ENCODE measurements at regions of chr5 and their contacts with region 1.

Region 1: DNA sequence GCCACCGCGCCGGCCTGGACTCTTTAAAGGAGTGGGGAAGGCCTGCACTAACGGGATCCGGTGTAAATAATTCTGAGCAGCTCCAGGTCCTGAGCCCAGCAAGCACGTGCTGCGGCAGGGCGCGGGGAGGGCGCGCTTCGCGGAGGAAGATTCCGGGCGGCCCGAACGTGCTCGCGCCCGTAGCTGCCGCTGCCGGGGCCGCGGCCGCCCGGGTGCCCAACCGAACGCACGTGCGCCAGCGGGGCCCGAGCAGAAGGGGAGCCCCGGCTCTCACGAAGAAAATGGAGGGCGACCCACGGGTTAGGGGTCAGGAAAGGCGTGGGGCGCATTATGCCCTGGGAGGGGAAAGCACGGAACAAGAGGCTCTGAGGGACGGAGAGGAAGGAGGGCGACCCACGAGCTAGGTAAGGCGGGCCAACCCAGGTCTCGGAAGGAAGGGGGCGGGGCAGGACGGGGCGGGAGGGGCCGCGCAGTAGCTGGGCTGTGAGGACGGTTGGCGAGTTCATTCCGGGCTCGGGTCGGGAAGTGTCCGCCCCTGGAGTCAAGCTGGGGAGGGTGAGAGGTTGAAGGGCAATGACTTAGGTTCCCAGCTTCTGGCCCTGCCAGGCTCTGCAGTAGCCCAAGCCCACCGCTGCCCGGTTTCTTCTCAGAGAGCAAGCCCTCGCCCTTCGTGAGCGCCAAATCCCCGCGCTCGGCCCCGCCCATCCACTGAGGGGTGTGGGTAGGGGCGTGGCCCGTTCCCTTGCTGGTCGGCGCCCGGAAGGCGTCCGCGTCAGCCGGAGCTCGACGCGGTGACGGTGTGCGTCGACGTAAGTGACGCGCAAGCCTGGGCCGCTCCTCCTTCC is at the start of gene ZNF131:
- DNase-seq: peak; percentile 96
- H3K4me3 Mint-ChIP-seq: peak within 1 kb of the TSS; percentile 95
- H3K27ac Mint-ChIP-seq: peak within 1 kb of the TSS; percentile 98
- H3K4me1 Mint-ChIP-seq: peaks cover 42% of the 10 kb centered on the region
- H3K27me3 Mint-ChIP-seq: peaks cover 2% of the 10 kb centered on the region
- total RNA-seq, gene ZNF131: 38.3 and 40.2 TPM in 2 replicates

Region 2: DNA sequence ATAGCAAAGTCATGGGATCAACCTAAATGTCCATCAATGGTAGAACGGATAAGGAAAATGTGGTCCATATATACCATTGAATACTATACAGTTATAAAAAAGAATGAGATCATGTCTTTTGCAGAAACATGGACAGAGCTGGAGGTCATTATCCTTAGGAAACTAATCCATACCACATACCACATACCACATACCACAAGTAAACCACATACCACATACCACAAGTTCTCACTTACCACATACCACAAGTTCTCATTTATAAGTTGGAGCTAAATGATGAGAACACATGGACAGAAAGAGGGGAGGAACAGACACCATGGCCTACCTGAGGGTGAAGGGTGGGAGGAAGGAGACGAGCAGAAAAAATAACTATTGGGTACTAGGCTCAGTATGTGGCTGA is 852.3 kb before region 1 on chr5:
- intact Hi-C with region 1: no loop called
- DNase-seq: no peak
- H3K4me3 Mint-ChIP-seq: no peak overlapping the region
- H3K27ac Mint-ChIP-seq: peak overlapping the region; percentile 50
- H3K4me1 Mint-ChIP-seq: no peaks in the 10 kb centered on the region
- H3K27me3 Mint-ChIP-seq: peaks cover 2% of the 10 kb centered on the region

Region 3: GRCh38 chr5:42950440-42951292 is 170.3 kb before region 1 on chr5:
- intact Hi-C with region 1: loop called (anchors 1 kb)
- DNase-seq: peak; percentile 60
- H3K4me3 Mint-ChIP-seq: peak overlapping the region; percentile 88
- H3K27ac Mint-ChIP-seq: peak overlapping the region; percentile 97
- H3K4me1 Mint-ChIP-seq: peaks cover 37% of the 10 kb centered on the region
- H3K27me3 Mint-ChIP-seq: peaks cover 8% of the 10 kb centered on the region

Region 4: GRCh38 chr5:43040287-43041098 is 80.4 kb before region 1 on chr5 and contains the start of gene ANXA2R:
- intact Hi-C with region 1: loop called (anchors 1 kb)
- DNase-seq: peak; percentile 93
- H3K4me3 Mint-ChIP-seq: peak within 1 kb of the TSS; percentile 82
- H3K27ac Mint-ChIP-seq: peak within 1 kb of the TSS; percentile 86
- H3K4me1 Mint-ChIP-seq: peaks cover 59% of the 10 kb centered on the region
- H3K27me3 Mint-ChIP-seq: no peaks in the 10 kb centered on the region
- total RNA-seq, gene ANXA2R: 0.88 and 0.93 TPM in 2 replicates

Region 5: GRCh38 chr5:43150748-43151147 is 29.8 kb after region 1 on chr5:
- intact Hi-C with region 1: no loop called
- DNase-seq: no peak
- H3K4me3 Mint-ChIP-seq: no peak overlapping the region
- H3K27ac Mint-ChIP-seq: no peak overlapping the region
- H3K4me1 Mint-ChIP-seq: peaks cover 7% of the 10 kb centered on the region
- H3K27me3 Mint-ChIP-seq: no peaks in the 10 kb centered on the region

Region 6: DNA sequence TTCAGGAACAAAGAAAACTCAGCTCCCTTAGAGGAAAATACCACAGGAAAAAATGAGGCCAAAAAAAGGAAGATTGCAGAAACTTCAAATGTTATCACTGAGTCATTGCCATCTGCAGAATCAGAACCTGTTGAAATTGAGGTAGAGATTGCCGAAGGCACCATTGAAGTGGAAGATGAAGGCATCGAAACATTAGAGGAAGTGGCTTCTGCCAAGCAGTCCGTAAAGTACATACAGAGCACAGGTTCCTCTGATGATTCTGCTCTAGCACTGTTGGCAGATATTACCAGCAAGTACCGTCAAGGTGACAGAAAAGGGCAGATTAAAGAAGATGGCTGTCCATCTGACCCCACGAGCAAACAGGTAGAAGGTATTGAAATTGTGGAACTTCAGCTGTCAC is 40.3 kb after region 1 on chr5:
- intact Hi-C with region 1: no loop called
- DNase-seq: no peak
- H3K4me3 Mint-ChIP-seq: no peak overlapping the region
- H3K27ac Mint-ChIP-seq: peak overlapping the region; percentile 49
- H3K4me1 Mint-ChIP-seq: peaks cover 10% of the 10 kb centered on the region
- H3K27me3 Mint-ChIP-seq: no peaks in the 10 kb centered on the region

Region 7: GRCh38 chr5:43191740-43192557 is 71.0 kb after region 1 on chr5 and contains the start of gene NIM1K:
- intact Hi-C with region 1: loop called (anchors 1 kb)
- DNase-seq: peak; percentile 39
- H3K4me3 Mint-ChIP-seq: peak within 1 kb of the TSS; percentile 85
- H3K27ac Mint-ChIP-seq: peak within 1 kb of the TSS; percentile 89
- H3K4me1 Mint-ChIP-seq: peaks cover 40% of the 10 kb centered on the region
- H3K27me3 Mint-ChIP-seq: peaks cover 22% of the 10 kb centered on the region
- total RNA-seq, gene NIM1K: 0.39 and 0.67 TPM in 2 replicates

Region 8: GRCh38 chr5:43514816-43515677 is 394.1 kb after region 1 on chr5 and contains the start of gene C5orf34:
- intact Hi-C with region 1: loop called (anchors 1 kb)
- DNase-seq: peak; percentile 92
- H3K4me3 Mint-ChIP-seq: peak within 1 kb of the TSS; percentile 94
- H3K27ac Mint-ChIP-seq: peak within 1 kb of the TSS; percentile 97
- H3K4me1 Mint-ChIP-seq: peaks cover 32% of the 10 kb centered on the region
- H3K27me3 Mint-ChIP-seq: peaks cover 2% of the 10 kb centered on the region
- total RNA-seq, gene C5orf34: 5.3 and 5.5 TPM in 2 replicates